Heart right ventricle (tissue), 16 donors: ENCODE measurements at regions of chr1 and their contacts with region 1.

Region 1: DNA sequence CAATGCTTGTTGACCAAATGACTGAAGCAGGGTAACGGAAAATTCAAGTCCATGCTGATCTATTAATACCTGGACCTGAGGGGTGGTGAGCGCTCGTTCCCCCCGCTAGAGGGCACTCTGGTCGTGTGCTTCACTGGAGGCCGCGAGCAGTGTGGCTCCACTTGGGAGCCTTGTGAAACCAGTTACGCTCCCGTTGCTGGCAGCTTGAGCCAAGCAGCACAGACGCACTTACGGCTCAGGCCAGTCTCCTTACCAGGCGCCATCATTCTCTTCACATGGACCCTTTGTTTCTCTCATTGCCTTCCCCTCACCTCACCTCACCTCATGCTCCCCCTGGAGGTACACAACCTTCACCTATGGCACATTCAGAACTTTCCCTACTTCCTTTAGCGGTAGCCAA is 49.7 kb upstream of the TSPAN2 start:
- DNase-seq: peak; percentile 84 to 86
- ATAC-seq: peak; percentile 86 to 94 (median 92)
- H3K4me3 ChIP-seq: no peak overlapping the region
- H3K27ac ChIP-seq: peak overlapping the region in 5 of 10 donors; percentile 25 to 59 (median 32)
- H3K4me1 ChIP-seq: peaks cover 0 to 41% (median 20%) of the 10 kb centered on the region in 9 donors
- H3K27me3 ChIP-seq: no peaks in the 10 kb centered on the region
- CTCF ChIP-seq: peak; percentile 77 to 95 (median 89)

Region 2: DNA sequence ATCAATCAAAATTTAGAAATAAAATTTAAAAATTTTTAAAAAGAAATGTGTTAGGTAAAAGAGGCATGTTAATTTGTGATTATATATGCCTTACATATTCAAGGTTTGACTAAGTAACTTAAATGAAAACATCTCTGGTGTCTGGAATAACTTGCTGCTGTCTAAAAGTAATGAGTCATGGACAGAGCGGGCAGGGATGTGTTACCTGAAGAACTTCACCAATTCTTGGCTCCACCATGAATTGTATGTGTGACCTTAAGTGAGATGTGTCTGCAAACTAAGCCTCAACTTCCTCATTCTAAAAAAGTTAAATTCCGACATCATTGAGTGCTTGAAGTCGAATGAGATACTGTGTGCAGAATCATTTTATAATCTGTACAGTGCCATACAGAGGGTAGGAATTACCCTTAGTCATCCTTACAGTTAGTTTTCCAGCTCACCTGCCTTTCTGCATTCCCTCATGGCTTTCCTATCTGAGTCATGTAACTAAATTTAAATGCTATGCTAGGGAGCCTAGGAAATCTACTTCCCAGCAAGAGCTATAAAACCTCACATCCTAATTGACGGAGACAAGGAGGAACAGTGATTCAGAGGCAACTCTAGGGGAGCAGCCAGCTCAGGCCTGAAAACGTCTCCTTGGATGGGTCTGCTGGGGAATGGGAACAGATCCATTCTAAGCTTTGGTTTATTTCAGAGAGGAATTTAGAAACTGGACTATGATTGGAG is 51.0 kb after region 1 on chr1:
- intact Hi-C with region 1: loop called in 1 of 10 experiments (anchors 10 kb)
- DNase-seq: no peak
- ATAC-seq: peak; percentile 36 to 90 (median 61)
- H3K4me3 ChIP-seq: no peak overlapping the region
- H3K27ac ChIP-seq: peak overlapping the region in 7 of 10 donors; percentile 1 to 71 (median 68)
- H3K4me1 ChIP-seq: peaks cover 5 to 46% (median 22%) of the 10 kb centered on the region in 9 donors
- H3K27me3 ChIP-seq: no peaks in the 10 kb centered on the region
- CTCF ChIP-seq: no peak

Region 3: GRCh38 chr1:115275212-115275611 is 136.2 kb after region 1 on chr1:
- intact Hi-C with region 1: loop called in 3 of 10 experiments (anchors 10 kb)
- DNase-seq: no peak
- ATAC-seq: no peak
- H3K4me3 ChIP-seq: no peak overlapping the region
- H3K27ac ChIP-seq: peak overlapping the region in 4 of 10 donors; percentile 38 to 57 (median 44)
- H3K4me1 ChIP-seq: peaks cover 0 to 13% (median 0%) of the 10 kb centered on the region in 9 donors
- H3K27me3 ChIP-seq: no peaks in the 10 kb centered on the region
- CTCF ChIP-seq: peak; percentile 14 to 59 (median 38)

Region 4: DNA sequence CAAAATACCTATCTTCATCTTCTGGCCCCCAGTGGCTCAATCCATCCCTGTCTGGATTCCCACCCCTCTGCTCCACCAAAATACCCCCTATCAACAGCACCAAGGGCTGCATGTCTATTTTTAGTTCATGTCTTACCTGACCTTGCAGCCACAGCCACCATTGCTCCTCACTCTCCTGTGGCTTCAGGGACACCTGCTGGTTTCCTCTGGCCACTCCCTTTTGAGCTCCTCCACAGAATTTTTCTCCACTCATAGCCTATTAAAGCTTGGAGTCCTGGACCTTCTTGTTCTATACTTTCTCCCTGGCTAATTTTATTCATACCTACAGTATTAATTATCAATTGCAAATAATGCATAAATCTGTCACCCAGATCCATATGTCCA is 324.4 kb after region 1 on chr1:
- intact Hi-C with region 1: loop called (anchors 1 to 5 kb)
- DNase-seq: peak in 1 of 2 donors; percentile 24
- ATAC-seq: peak in 6 of 8 donors; percentile 54 to 82 (median 68)
- H3K4me3 ChIP-seq: no peak overlapping the region
- H3K27ac ChIP-seq: no peak overlapping the region
- H3K4me1 ChIP-seq: peaks cover 0 to 8% (median 0%) of the 10 kb centered on the region in 9 donors
- H3K27me3 ChIP-seq: peaks cover 0 to 4% (median 0%) of the 10 kb centered on the region in 7 donors
- CTCF ChIP-seq: peak in 8 of 9 donors; percentile 7 to 60 (median 44)

Region 5: GRCh38 chr1:115506926-115507589 is 368.1 kb after region 1 on chr1:
- intact Hi-C with region 1: loop called in 3 of 10 experiments (anchors 1 to 10 kb)
- DNase-seq: peak in 1 of 2 donors; percentile 20
- ATAC-seq: peak in 6 of 8 donors; percentile 59 to 79 (median 70)
- H3K4me3 ChIP-seq: no peak overlapping the region
- H3K27ac ChIP-seq: no peak overlapping the region
- H3K4me1 ChIP-seq: peaks cover 0 to 13% (median 0%) of the 10 kb centered on the region in 9 donors
- H3K27me3 ChIP-seq: peaks cover 0 to 3% (median 0%) of the 10 kb centered on the region in 7 donors
- CTCF ChIP-seq: peak in 8 of 9 donors; percentile 8 to 62 (median 46)